Activated CD4-positive, alpha-beta memory T cell treated with anti-CD3 and anti-CD28 coated beads, Interleukin-2, amount 10 ng/mL, durations not matched to agents 7 days and 5 days (primary cell): ENCODE measurements at regions of chr5 and their contacts with region 1.

Region 1: GRCh38 chr5:134225618-134226440 is at the start of gene PPP2CA:
- DNase-seq: peak; percentile 99
- H3K4me3 Mint-ChIP-seq: peak within 1 kb of the TSS; percentile 95
- H3K27ac Mint-ChIP-seq: peak within 1 kb of the TSS; percentile 98
- H3K4me1 Mint-ChIP-seq: peaks cover 45% of the 10 kb centered on the region
- H3K27me3 Mint-ChIP-seq: no peaks in the 10 kb centered on the region
- total RNA-seq, gene PPP2CA: 146 to 156 TPM

Region 2: DNA sequence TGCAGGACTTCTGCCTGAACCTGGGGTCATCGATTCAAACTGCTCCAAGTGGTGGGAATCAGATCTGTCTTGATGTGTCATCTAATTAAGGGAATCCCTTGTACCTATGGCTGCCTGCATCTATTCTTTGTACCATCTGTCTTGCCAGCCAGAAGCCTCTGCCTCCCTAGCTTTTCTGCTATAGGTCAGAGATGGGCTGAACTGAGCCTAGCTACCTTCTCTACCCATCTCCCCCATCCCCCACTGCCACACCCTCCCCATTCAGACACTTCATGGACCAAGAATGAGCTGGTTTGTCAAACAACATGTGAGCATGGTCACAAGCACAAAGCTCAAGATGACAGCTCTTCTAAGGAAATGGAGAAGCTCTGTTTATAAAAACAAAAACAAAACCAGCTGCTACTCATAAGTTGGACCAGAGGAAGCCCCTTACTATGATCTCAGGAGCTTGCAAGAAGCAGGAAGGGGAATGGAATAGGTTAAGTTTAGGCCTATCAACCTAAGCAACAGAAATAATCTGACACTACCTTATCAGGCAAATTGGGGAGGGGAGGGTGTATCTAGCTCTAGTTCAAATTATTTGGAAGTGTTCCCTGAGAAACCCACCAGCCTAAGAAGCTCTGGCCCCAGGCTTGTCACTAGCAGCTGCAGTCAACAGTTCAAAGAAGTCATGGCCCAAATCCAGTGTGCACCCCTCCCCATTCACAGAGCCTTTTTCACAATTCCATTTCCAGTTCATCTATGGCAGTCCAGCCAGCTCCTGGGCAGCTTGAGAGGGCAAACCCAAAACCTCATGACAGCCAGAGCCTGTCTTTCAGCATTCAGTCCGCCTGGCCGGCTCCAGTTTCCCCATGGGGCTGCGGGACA is 78.9 kb before region 1 on chr5:
- CTCF ChIA-PET with region 1: no interaction called
- POLR2A ChIA-PET with region 1: no interaction called
- DNase-seq: no peak
- H3K4me3 Mint-ChIP-seq: no peak overlapping the region
- H3K27ac Mint-ChIP-seq: no peak overlapping the region
- H3K4me1 Mint-ChIP-seq: peaks cover 8% of the 10 kb centered on the region
- H3K27me3 Mint-ChIP-seq: no peaks in the 10 kb centered on the region

Region 3: DNA sequence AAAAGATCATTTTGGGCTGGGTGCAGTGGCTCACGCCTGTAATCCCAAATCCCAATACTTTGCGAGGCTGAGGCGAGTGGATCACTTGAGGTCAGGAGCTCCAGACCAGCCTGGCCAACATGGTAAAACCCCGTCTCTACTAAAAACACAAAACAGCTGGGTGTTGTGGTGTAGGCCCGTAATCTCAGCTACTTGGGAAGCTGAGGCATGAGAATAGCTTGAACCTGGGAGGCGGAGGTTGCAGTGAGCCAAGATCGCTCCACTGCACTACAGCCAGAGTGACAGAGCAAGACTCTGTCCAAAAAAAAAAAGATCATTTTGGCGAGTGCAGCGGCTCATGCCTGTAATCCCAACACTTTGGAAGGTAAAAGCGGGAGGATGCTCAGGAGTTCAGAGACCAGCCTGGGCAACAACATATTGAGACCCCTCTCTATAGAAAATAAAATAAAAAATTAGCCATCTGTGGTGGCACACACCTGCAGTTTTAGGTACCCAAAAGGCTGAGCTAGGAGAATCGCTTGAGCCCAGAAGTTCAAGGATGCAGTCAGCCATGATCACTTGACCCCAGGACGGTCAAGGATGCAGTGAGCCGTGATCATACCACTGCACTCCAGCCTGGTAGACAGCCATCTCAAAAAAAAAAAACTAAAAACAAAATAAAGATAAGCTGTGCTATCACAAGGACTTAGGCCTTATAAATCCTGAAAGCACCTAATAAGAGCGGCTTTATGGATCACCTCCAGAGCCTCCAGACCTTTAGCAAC is 16.2 kb before region 1 on chr5:
- CTCF ChIA-PET with region 1: interaction called, 5 read pairs
- POLR2A ChIA-PET with region 1: interaction called, 39 read pairs
- DNase-seq: no peak
- H3K4me3 Mint-ChIP-seq: no peak overlapping the region
- H3K27ac Mint-ChIP-seq: no peak overlapping the region
- H3K4me1 Mint-ChIP-seq: peaks cover 17% of the 10 kb centered on the region
- H3K27me3 Mint-ChIP-seq: no peaks in the 10 kb centered on the region

Region 4: GRCh38 chr5:134255418-134256175 is 29.8 kb after region 1 on chr5:
- CTCF ChIA-PET with region 1: no interaction called
- POLR2A ChIA-PET with region 1: no interaction called
- DNase-seq: no peak
- H3K4me3 Mint-ChIP-seq: no peak overlapping the region
- H3K27ac Mint-ChIP-seq: no peak overlapping the region
- H3K4me1 Mint-ChIP-seq: no peaks in the 10 kb centered on the region
- H3K27me3 Mint-ChIP-seq: peaks cover 5% of the 10 kb centered on the region

Region 5: DNA sequence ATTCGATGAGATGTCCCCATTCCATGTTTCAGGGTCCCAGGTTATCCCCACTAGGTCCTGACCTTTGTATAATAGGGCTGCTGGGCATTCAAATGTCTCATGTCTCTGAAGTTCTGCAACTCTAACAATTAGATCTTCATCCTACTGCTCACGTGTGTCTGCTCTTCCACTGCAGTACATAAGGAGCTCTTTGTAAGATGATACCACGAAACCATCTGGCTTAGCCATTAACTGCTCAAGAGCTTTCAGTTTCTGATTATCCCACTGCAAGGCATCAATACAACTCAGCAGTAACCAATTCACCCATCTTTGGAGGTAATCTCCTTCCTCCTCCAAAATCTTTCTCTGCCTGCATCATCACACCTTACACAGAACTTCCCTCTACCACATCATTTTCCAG is 50.0 kb after region 1 on chr5:
- CTCF ChIA-PET with region 1: interaction called, 4 read pairs
- POLR2A ChIA-PET with region 1: interaction called, 15 read pairs
- DNase-seq: no peak
- H3K4me3 Mint-ChIP-seq: no peak overlapping the region
- H3K27ac Mint-ChIP-seq: no peak overlapping the region
- H3K4me1 Mint-ChIP-seq: peaks cover 8% of the 10 kb centered on the region
- H3K27me3 Mint-ChIP-seq: peaks cover 3% of the 10 kb centered on the region

Region 6: GRCh38 chr5:134527146-134527960 is 301.5 kb after region 1 on chr5:
- CTCF ChIA-PET with region 1: interaction called, 3 read pairs
- POLR2A ChIA-PET with region 1: interaction called, 13 read pairs
- DNase-seq: peak; percentile 74
- H3K4me3 Mint-ChIP-seq: peak overlapping the region; percentile 93
- H3K27ac Mint-ChIP-seq: peak overlapping the region; percentile 89
- H3K4me1 Mint-ChIP-seq: peaks cover 37% of the 10 kb centered on the region
- H3K27me3 Mint-ChIP-seq: peaks cover 5% of the 10 kb centered on the region

Region 7: DNA sequence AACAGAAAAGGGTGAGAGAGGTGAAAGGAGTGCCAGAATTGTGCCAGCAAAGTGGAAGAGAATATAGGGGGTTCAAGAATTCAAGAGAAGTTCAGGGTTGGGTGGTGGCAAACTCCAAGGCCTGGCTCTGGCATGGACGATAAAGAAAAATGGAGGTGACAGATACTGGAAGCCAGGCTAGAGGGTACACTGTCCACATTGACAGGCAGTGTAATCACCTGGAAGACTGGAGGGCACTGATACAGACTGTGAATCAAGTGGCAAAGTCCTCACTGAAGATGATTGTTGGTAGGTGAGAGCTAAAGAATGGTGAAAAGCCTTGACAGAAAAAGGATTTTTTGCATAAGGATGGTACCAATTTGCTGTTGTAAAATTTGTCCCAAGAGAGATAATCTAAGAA is 399.7 kb after region 1 on chr5:
- CTCF ChIA-PET with region 1: no interaction called
- POLR2A ChIA-PET with region 1: no interaction called
- DNase-seq: no peak
- H3K4me3 Mint-ChIP-seq: no peak overlapping the region
- H3K27ac Mint-ChIP-seq: no peak overlapping the region
- H3K4me1 Mint-ChIP-seq: peaks cover 18% of the 10 kb centered on the region
- H3K27me3 Mint-ChIP-seq: no peaks in the 10 kb centered on the region

Region 8: GRCh38 chr5:134738133-134738962 is 512.5 kb after region 1 on chr5 and contains the start of gene CAMLG:
- CTCF ChIA-PET with region 1: interaction called, 5 read pairs
- POLR2A ChIA-PET with region 1: interaction called, 12 read pairs
- DNase-seq: peak; percentile 98
- H3K4me3 Mint-ChIP-seq: peak within 1 kb of the TSS; percentile 92
- H3K27ac Mint-ChIP-seq: peak within 1 kb of the TSS; percentile 84
- H3K4me1 Mint-ChIP-seq: peaks cover 34% of the 10 kb centered on the region
- H3K27me3 Mint-ChIP-seq: no peaks in the 10 kb centered on the region
- total RNA-seq, gene CAMLG: 30.5 to 31.0 TPM